AG04449 (cell line): ENCODE measurements at regions of chr1 and their contacts with region 1.

Region 1: DNA sequence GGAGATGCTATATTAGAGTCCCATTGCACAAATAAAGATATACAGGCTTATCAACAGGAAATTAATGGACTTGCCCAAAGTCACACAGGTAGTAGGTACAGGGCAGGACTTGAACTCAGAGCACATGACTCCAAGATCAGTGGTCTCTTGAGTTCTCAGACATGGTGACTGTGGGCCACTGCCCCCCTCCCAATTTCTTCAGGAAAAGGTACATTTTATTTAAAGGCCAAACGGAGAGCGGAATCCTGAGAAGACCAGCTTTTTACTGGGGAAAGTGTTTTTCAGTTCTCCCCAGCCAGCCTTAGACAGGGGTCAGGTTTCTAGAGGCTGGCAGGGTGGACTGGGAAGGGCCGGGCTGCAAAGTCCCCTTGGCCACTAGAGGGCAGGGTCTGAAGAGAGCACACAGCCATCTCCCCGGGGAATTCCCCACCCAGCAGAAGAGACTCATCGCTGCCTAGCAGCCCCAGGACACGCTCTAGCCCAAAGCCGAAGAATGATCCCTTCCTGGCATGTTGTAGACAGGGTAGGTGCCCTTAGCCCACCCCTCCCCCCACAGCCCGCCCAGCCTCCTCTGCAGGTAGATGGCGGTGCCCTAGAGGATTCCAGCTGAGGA is 29.7 kb downstream of the ACP6 start:
- DNase-seq: peak; percentile 24
- H3K4me3 ChIP-seq: no peak overlapping the region
- CTCF ChIP-seq: peak; percentile 87

Region 2: DNA sequence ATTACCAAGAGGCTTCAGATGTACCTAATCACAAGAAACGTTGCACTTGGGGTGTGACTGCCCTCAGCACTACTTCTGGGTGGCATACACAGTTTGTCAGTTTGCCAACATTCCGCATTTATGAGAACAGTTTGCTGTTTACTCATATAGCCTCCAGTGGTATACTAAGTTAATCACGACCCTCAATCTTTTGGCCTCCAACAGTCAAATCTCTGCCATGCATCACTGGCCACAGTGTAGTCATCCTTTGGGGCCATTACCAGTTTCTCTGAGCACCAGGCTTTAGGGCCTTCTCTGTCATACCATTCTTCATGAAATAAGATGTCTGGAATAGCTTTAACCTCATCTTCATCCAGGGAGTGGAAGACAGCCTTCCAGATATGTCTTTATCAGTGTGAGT is 162.1 kb before region 1 on chr1:
- CTCF ChIA-PET with region 1: no interaction called
- POLR2A ChIA-PET with region 1: no interaction called
- DNase-seq: no peak
- H3K4me3 ChIP-seq: no peak overlapping the region
- CTCF ChIP-seq: no peak

Region 3: GRCh38 chr1:147627435-147628110 is 13.1 kb before region 1 on chr1:
- CTCF ChIA-PET with region 1: interaction called, 71 read pairs
- POLR2A ChIA-PET with region 1: no interaction called
- DNase-seq: no peak
- H3K4me3 ChIP-seq: no peak overlapping the region
- CTCF ChIP-seq: peak; percentile 89

Region 4: DNA sequence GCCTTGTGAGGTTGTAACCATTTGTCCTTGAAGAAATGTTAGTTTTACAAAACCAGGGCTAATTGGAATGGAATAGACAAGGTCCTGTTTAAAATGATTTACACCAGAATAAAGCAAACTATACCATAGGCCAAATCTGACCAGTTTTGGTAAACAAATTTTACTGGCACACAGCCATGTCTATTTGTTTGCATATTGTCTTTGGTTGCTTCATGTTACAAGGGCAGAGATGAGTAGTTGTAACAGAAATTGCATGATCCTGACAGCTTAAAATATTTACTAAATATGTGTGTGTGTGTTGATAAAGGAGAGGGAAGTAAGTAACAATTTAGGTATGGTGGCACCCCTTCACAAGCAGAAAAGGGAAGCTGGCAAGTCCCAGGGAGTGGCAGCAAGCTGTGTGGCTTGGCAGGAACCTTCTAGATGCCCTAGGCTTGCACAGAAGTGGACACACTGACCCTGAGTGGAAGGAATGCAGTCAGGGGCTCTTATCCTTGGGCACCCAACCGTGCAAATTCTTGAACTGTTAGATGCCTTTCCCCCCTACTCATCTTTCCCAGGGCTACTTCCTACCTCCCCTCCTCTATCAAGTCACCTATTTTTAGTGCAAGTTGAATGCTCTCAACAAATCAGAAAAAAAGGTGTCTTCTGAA is 10.7 kb after region 1 on chr1:
- CTCF ChIA-PET with region 1: interaction called, 20 read pairs
- POLR2A ChIA-PET with region 1: no interaction called
- DNase-seq: no peak
- H3K4me3 ChIP-seq: no peak overlapping the region
- CTCF ChIP-seq: no peak

Region 5: DNA sequence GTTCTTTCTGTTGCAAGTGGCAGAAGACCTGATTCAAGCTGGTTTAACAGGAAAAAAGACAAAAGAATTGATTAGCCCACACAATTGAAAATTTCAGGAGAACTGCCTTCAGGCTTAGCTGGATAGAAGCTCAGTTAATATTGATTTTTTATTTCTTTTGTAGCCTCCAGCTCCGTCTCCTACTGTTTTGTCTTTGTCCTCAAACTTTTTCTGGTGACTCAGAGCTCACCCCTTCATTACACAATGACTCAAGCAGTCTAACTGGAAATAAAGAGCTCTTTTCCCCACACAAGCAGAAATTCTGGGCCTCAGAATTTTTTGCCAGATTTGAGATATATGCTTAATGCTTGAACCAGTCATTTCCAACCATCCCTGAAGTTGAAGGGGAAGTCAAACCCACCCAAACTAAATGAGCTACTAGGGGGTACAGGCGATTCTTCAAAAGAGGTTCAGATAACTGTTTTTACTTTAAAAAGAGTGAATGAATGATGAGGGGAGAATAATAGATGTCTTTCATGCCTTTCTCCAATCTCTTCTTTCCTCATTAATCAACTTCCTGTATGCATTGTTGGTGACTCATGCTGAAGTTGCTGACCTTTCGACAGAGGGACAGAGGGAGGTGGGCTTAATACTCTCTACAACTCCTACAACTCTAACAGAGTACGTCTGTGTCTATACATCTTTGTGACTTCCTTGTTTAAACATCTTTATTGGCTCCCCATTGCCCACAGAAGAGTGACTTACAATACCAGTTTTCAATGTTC is 35.8 kb after region 1 on chr1:
- CTCF ChIA-PET with region 1: interaction called, 10 read pairs
- POLR2A ChIA-PET with region 1: no interaction called
- DNase-seq: no peak
- H3K4me3 ChIP-seq: no peak overlapping the region
- CTCF ChIP-seq: no peak

Region 6: GRCh38 chr1:147890177-147890790 is 249.6 kb after region 1 on chr1:
- CTCF ChIA-PET with region 1: interaction called, 15 read pairs
- POLR2A ChIA-PET with region 1: no interaction called
- DNase-seq: no peak
- H3K4me3 ChIP-seq: no peak overlapping the region
- CTCF ChIP-seq: peak; percentile 46